Head of caudate nucleus (tissue), 42 donors: ENCODE measurements at regions of chr11 and their contacts with region 1.

Region 1: GRCh38 chr11:111878849-111879636 is at the starts of genes CFAP68 and FDXACB1:
- DNase-seq: peak; percentile 94 to 99 (median 98)

Region 2: GRCh38 chr11:111652184-111652583 is 226.9 kb before region 1 on chr11:
- intact Hi-C with region 1: no loop called
- DNase-seq: no peak

Region 3: GRCh38 chr11:111860257-111860656 is 18.8 kb before region 1 on chr11:
- intact Hi-C with region 1: no loop called
- DNase-seq: no peak

Region 4: DNA sequence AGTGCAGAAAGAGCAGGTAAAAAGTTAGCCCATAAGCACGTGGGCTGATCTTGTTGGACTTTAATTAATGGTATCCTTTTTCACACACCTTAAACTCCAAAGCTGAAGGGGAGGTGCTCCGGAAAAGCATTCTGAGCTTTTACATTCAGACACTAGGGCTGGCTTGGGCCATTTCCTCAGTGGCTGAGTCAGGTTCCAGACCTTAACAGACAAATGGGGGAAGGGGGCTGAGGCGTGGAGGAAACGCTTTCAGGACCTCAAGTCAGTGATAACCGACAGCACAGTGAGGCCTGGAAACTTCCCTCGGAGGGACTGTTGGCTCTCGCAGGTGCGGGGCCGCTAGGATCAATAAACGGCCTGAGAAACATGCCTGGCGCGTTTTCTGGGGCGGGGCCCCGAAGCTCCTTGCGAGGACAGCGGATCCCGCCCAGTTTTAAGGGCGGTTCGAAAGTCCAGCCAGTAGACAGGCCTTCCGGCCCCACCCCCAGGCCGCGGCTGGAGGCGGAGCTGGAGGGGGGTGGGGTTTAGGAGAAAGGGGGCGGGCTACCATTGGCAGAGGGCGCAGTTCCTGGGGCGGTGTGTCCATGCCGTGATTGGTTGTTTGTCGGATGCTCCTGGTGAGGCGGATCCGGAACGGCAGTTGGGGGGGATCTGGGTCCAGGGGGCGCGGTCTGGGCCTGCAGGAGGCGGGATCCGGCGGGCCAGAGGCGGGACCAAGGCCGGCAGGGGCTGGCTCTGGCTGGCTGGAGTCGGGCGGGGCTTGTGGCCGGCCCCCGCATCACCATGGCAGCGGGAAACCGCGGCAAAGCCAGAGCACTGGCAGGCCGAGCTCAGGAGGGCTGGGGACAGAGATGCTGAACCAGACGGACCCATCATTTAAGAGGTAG is 47.7 kb after region 1 on chr11:
- intact Hi-C with region 1: loop called (anchors 5 kb)
- DNase-seq: peak; percentile 91 to 99 (median 98)

Region 5: GRCh38 chr11:112086422-112087191 is 207.6 kb after region 1 on chr11 and contains the starts of genes SDHD and TIMM8B:
- intact Hi-C with region 1: loop called (anchors 10 kb)
- DNase-seq: peak; percentile 91 to 98 (median 96)